ENCODE measurements at regions of chr2 and their contacts with region 1.

Region 1: GRCh38 chr2:227324995-227325838 is at the start of gene MFF:
- DNase-seq: peak; percentile 97
- H3K4me3 Mint-ChIP-seq: peak within 1 kb of the TSS; percentile 94
- H3K27ac Mint-ChIP-seq: peak within 1 kb of the TSS; percentile 95
- H3K4me1 Mint-ChIP-seq: peaks cover 32% of the 10 kb centered on the region
- H3K27me3 Mint-ChIP-seq: peaks cover 6% of the 10 kb centered on the region
- total RNA-seq, gene MFF: 69.5 and 71.6 TPM in 2 replicates

Region 2: DNA sequence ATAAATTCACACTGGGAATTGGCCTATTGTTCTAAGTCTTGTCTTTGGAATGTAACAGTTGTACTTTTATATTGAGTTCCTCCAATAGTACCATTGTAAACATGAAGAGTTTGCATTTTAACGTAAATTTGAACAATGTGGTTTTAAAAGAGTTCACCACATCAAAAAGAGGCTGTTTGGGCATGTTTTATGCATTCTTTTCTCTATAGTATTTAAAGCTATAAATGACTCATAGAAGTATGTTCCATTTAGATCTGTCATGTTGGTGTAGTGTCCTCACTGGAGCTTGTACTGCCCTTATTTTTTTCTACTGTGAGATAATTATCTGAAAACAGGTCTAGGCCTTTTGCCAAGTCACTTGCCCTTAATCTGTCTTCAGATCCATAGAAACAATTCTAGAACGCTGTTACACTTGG is 347.4 kb before region 1 on chr2:
- intact Hi-C with region 1: loop called (anchors 5 kb)
- DNase-seq: no peak
- H3K4me3 Mint-ChIP-seq: no peak overlapping the region
- H3K27ac Mint-ChIP-seq: no peak overlapping the region
- H3K4me1 Mint-ChIP-seq: peaks cover 26% of the 10 kb centered on the region
- H3K27me3 Mint-ChIP-seq: no peaks in the 10 kb centered on the region

Region 3: GRCh38 chr2:227374158-227374557 is 48.9 kb after region 1 on chr2:
- intact Hi-C with region 1: loop called (anchors 1 kb)
- DNase-seq: peak; percentile 70
- H3K4me3 Mint-ChIP-seq: no peak overlapping the region
- H3K27ac Mint-ChIP-seq: no peak overlapping the region
- H3K4me1 Mint-ChIP-seq: peaks cover 12% of the 10 kb centered on the region
- H3K27me3 Mint-ChIP-seq: no peaks in the 10 kb centered on the region